CD8-positive, alpha-beta T cell (primary cell): ENCODE measurements at regions of chr15 and their contacts with region 1.

Region 1: GRCh38 chr15:82749951-82750830 is 40.5 kb upstream of the AP3B2 start:
- DNase-seq: peak; percentile 50 to 91 (median 85)
- ATAC-seq: peak; percentile 94
- H3K4me3 ChIP-seq: peak overlapping the region; percentile 73 to 83
- H3K4me3 Mint-ChIP-seq: peak overlapping the region; percentile 100
- H3K27ac ChIP-seq: peak overlapping the region; percentile 52 to 76
- H3K27ac Mint-ChIP-seq: peak overlapping the region; percentile 99
- H3K4me1 ChIP-seq: peaks cover 21% of the 10 kb centered on the region
- H3K4me1 Mint-ChIP-seq: peaks cover 55% of the 10 kb centered on the region
- H3K27me3 ChIP-seq: no peaks in the 10 kb centered on the region
- H3K27me3 Mint-ChIP-seq: no peaks in the 10 kb centered on the region
- CTCF ChIP-seq: no peak

Region 2: DNA sequence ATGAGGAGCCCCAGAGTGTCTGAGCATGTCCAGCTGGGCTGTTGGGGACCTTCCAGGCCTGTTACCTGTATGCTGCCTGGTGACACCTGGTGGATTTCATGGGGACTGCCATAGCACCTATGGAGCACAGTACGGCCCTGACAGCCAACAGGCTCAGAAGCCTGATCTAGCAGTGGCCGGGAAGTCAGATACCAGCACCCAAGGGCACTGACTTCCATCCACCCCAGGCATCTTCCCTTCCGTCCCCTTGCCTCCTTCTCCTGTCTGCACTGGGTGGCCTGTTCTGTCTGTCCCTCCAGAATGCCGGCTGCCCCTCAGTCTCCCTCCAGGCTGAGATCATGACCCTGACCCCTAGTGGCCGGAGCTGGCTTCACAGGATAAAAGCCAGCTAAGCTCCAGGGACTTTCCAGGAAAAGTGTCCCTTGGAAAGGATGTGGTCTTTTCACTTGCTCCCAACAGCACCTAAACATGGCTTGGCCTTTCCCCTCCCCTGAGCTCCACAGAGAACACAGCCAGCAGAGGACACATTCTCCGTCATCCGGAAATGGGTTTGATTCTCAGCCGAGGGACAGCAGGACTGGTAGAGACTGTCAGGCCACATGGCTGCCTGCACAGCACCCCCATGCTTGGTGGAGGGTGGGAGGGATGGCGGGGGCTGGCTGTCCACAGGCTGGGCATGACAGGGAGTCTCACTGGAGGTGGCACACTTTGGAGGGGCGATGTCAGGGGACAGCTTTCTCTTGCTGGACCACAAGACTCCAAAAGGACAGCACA is 219.4 kb before region 1 on chr15:
- CTCF ChIA-PET with region 1: no interaction called
- POLR2A ChIA-PET with region 1: no interaction called
- intact Hi-C with region 1: loop called in 1 of 2 experiments (anchors 2 kb)
- DNase-seq: peak; percentile 49 to 85 (median 73)
- ATAC-seq: peak; percentile 94
- H3K4me3 ChIP-seq: peak overlapping the region; percentile 15 to 17
- H3K4me3 Mint-ChIP-seq: peak overlapping the region; percentile 76
- H3K27ac ChIP-seq: no peak overlapping the region
- H3K27ac Mint-ChIP-seq: peak overlapping the region; percentile 78
- H3K4me1 ChIP-seq: no peaks in the 10 kb centered on the region
- H3K4me1 Mint-ChIP-seq: peaks cover 5% of the 10 kb centered on the region
- H3K27me3 ChIP-seq: no peaks in the 10 kb centered on the region
- H3K27me3 Mint-ChIP-seq: no peaks in the 10 kb centered on the region
- CTCF ChIP-seq: peak; percentile 87

Region 3: GRCh38 chr15:82647045-82647834 is 103.0 kb before region 1 on chr15 and contains the start of gene CPEB1:
- CTCF ChIA-PET with region 1: no interaction called
- POLR2A ChIA-PET with region 1: no interaction called
- intact Hi-C with region 1: loop called in 1 of 2 experiments (anchors 1 kb)
- DNase-seq: peak in 8 of 9 experiments; percentile 9 to 64 (median 50)
- ATAC-seq: peak; percentile 60
- H3K4me3 ChIP-seq: peak within 1 kb of the TSS; percentile 32 to 60
- H3K4me3 Mint-ChIP-seq: peak within 1 kb of the TSS; percentile 78
- H3K27ac ChIP-seq: no peak within 1 kb of the TSS
- H3K27ac Mint-ChIP-seq: no peak within 1 kb of the TSS
- H3K4me1 ChIP-seq: peaks cover 20% of the 10 kb centered on the region
- H3K4me1 Mint-ChIP-seq: peaks cover 12% of the 10 kb centered on the region
- H3K27me3 ChIP-seq: peaks cover 0 to 11% of the 10 kb centered on the region in 2 experiments
- H3K27me3 Mint-ChIP-seq: peaks cover 21% of the 10 kb centered on the region
- CTCF ChIP-seq: peak; percentile 22
- total RNA-seq, gene CPEB1: 0.27 to 0.53 TPM

Region 4: DNA sequence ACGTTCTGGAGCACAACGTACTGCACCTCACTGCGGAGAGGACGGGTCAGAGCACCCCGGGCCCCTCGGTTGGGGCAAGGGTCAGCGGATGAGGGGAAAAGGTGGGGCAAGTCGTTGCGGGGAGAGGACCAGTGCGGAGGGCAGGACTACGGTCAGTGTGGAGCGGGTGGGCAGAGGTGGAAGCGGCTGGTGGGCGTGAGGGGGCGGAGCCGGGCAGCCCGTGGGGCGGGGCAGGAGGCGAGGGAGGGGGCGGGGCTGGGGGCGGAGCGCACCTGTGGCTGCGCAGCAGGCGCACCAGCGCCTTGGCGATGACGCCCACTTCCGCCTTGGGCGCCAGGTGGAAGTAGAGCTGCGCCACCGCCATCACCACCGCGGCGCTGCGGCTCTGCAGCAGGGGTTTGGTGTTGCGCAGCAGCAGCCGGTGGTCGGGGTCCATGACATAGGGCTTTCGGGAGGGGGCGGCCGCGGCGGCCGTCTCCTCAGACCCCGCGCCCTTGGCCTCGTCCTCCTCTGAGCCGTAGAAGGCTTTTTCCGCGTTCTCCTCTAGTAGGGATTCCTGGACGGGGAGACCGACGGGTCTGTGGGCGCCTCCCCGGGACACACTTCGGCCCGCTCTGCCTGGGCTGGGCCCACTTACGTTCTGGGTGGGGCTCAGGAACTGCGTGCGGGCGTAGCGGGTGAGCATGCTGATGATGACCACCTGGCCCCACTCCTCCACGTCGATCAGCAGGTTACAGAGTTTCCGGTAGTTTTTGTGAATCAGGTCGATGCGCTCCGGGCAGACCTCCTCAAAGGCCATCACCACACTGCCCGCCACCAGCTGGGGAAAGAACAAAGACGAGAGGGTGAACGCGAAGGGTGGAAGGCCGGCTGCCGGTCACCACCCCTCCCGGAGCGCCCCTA is 69.7 kb before region 1 on chr15:
- CTCF ChIA-PET with region 1: no interaction called
- POLR2A ChIA-PET with region 1: interaction called, 5 read pairs
- intact Hi-C with region 1: loop called (anchors 1 kb)
- DNase-seq: peak; percentile 65 to 92 (median 82)
- ATAC-seq: peak; percentile 95
- H3K4me3 ChIP-seq: peak overlapping the region; percentile 71 to 81
- H3K4me3 Mint-ChIP-seq: peak overlapping the region; percentile 91
- H3K27ac ChIP-seq: peak overlapping the region; percentile 68 to 76
- H3K27ac Mint-ChIP-seq: peak overlapping the region; percentile 96
- H3K4me1 ChIP-seq: peaks cover 12% of the 10 kb centered on the region
- H3K4me1 Mint-ChIP-seq: peaks cover 13% of the 10 kb centered on the region
- H3K27me3 ChIP-seq: peaks cover 0 to 3% of the 10 kb centered on the region in 2 experiments
- H3K27me3 Mint-ChIP-seq: no peaks in the 10 kb centered on the region
- CTCF ChIP-seq: peak; percentile 25

Region 5: DNA sequence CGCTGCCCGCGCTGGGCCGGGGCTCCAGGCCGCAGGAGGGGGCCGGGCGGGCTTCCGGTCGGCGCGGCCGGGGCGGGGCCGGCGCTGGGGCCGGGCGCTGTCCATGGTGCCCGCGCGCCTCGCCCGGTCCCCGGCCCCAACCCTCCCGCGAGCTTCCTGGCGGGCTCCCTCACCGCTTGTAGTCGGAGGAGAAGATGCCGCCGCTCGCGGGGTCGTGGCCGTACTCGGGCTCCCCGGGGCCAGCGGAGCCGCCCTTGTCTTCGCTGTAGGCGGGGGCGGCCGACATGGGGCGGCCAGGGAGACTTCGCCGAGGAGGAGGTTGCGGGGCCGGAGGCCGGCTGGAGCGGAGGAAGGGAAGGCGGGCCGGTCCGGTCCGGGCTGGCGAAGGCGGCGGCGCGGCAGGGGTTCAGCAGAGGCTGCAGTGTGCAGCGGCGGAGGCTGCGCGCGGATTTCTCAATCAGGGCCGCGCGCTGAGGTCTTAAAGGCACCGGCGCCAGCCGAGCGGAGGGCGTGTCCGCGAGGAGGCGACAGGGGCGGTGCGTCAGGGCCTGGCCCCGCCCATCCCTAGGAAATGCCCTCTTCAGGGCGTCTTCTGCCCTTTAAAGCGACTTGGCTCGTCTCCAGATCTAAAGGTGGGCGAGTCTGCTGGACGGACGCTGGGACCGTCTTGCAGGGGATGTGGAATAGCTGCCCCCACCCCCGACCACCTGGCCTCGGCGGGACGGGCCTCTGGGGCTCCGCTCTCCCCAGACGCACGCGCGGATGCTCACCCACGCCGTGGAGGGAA is 40.6 kb before region 1 on chr15 and contains the start of gene AP3B2:
- CTCF ChIA-PET with region 1: no interaction called
- POLR2A ChIA-PET with region 1: no interaction called
- intact Hi-C with region 1: loop called (anchors 1 to 2 kb)
- DNase-seq: peak; percentile 40 to 82 (median 67)
- ATAC-seq: peak; percentile 95
- H3K4me3 ChIP-seq: peak within 1 kb of the TSS; percentile 44 to 81
- H3K4me3 Mint-ChIP-seq: peak within 1 kb of the TSS; percentile 76
- H3K27ac ChIP-seq: no peak within 1 kb of the TSS
- H3K27ac Mint-ChIP-seq: no peak within 1 kb of the TSS
- H3K4me1 ChIP-seq: peaks cover 13% of the 10 kb centered on the region
- H3K4me1 Mint-ChIP-seq: peaks cover 1% of the 10 kb centered on the region
- H3K27me3 ChIP-seq: peaks cover 0 to 6% of the 10 kb centered on the region in 2 experiments
- H3K27me3 Mint-ChIP-seq: peaks cover 25% of the 10 kb centered on the region
- CTCF ChIP-seq: no peak
- total RNA-seq, gene AP3B2: 0.81 to 0.90 TPM

Region 6: DNA sequence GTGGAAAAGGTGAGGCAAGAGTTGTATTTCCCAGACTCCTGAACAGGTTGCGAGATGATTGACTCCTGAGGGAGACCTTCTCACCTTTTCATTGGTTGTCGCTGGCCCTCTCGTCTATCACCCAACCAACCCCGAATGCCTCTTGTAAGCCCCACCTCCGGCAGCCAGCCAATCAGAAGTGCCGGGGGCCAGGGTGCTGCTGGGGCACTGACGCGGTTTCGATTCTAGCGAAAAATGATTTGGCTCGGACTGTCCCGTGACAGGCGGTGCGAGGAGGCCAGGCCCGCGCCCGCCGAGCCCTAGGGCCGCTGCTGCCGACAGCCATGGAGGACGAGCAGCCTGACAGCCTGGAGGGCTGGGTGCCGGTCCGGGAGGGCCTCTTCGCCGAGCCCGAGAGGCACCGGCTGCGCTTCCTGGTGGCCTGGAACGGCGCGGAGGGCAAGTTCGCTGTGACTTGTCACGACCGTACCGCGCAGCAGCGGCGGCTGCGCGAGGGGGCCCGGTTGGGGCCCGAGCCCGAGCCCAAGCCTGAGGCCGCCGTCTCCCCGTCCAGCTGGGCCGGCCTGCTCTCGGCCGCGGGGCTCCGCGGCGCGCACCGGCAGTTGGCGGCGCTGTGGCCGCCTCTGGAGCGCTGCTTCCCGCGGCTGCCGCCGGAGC is 59.3 kb after region 1 on chr15 and contains the start of gene WHAMM:
- CTCF ChIA-PET with region 1: interaction called, 4 read pairs
- POLR2A ChIA-PET with region 1: interaction called, 8 read pairs
- intact Hi-C with region 1: loop called (anchors 1 kb)
- DNase-seq: peak; percentile 89 to 98 (median 94)
- ATAC-seq: peak; percentile 93
- H3K4me3 ChIP-seq: peak within 1 kb of the TSS; percentile 67 to 69
- H3K4me3 Mint-ChIP-seq: peak within 1 kb of the TSS; percentile 92
- H3K27ac ChIP-seq: peak within 1 kb of the TSS; percentile 93 to 97
- H3K27ac Mint-ChIP-seq: peak within 1 kb of the TSS; percentile 97
- H3K4me1 ChIP-seq: peaks cover 26% of the 10 kb centered on the region
- H3K4me1 Mint-ChIP-seq: peaks cover 32% of the 10 kb centered on the region
- H3K27me3 ChIP-seq: no peaks in the 10 kb centered on the region
- H3K27me3 Mint-ChIP-seq: no peaks in the 10 kb centered on the region
- CTCF ChIP-seq: no peak
- total RNA-seq, gene WHAMM: 123 to 124 TPM

Region 7: GRCh38 chr15:83011271-83012075 is 261.3 kb after region 1 on chr15 and contains the start of gene C15orf40:
- CTCF ChIA-PET with region 1: interaction called, 6 read pairs
- POLR2A ChIA-PET with region 1: no interaction called
- intact Hi-C with region 1: loop called (anchors 2 kb)
- DNase-seq: peak; percentile 62 to 94 (median 86)
- ATAC-seq: peak; percentile 80
- H3K4me3 ChIP-seq: peak within 1 kb of the TSS; percentile 86 to 95
- H3K4me3 Mint-ChIP-seq: peak within 1 kb of the TSS; percentile 100
- H3K27ac ChIP-seq: peak within 1 kb of the TSS; percentile 75 to 79
- H3K27ac Mint-ChIP-seq: peak within 1 kb of the TSS; percentile 99
- H3K4me1 ChIP-seq: peaks cover 26% of the 10 kb centered on the region
- H3K4me1 Mint-ChIP-seq: peaks cover 58% of the 10 kb centered on the region
- H3K27me3 ChIP-seq: no peaks in the 10 kb centered on the region
- H3K27me3 Mint-ChIP-seq: no peaks in the 10 kb centered on the region
- CTCF ChIP-seq: no peak
- total RNA-seq, gene C15orf40: 11.8 to 12.3 TPM